AG04449 (cell line): ENCODE measurements at regions of chr10 and their contacts with region 1.

Region 1: GRCh38 chr10:132347211-132347930 is 15.4 kb downstream of the LRRC27 start:
- DNase-seq: no peak
- H3K4me3 ChIP-seq: no peak overlapping the region
- CTCF ChIP-seq: no peak

Region 2: DNA sequence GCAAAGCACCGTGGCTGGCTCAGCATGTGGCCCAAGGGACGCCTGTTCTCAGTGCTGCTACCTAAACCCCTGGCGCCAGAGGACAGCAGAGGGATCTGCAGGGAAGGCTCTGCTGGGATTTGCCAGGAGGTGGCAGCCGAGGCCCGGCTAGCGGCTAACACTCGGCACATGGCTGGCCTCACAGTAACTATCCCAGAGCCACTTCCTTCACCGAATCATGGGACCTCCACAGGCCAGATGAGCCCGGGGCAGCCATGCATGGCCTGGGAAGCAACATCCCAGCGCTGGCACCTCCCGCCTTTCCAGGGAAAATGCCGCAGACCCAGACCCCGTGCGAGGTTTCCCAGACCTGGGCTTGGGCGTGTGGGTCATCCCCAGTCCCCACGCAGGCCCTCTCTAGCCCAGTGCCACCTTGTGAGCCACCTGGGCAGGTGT is 124.2 kb before region 1 on chr10:
- CTCF ChIA-PET with region 1: interaction called, 49 read pairs
- POLR2A ChIA-PET with region 1: no interaction called
- DNase-seq: peak; percentile 7
- H3K4me3 ChIP-seq: no peak overlapping the region
- CTCF ChIP-seq: peak; percentile 99

Region 3: GRCh38 chr10:132335189-132336063 is 11.9 kb before region 1 on chr10:
- CTCF ChIA-PET with region 1: interaction called, 12 read pairs
- POLR2A ChIA-PET with region 1: no interaction called
- DNase-seq: no peak
- H3K4me3 ChIP-seq: no peak overlapping the region
- CTCF ChIP-seq: no peak

Region 4: DNA sequence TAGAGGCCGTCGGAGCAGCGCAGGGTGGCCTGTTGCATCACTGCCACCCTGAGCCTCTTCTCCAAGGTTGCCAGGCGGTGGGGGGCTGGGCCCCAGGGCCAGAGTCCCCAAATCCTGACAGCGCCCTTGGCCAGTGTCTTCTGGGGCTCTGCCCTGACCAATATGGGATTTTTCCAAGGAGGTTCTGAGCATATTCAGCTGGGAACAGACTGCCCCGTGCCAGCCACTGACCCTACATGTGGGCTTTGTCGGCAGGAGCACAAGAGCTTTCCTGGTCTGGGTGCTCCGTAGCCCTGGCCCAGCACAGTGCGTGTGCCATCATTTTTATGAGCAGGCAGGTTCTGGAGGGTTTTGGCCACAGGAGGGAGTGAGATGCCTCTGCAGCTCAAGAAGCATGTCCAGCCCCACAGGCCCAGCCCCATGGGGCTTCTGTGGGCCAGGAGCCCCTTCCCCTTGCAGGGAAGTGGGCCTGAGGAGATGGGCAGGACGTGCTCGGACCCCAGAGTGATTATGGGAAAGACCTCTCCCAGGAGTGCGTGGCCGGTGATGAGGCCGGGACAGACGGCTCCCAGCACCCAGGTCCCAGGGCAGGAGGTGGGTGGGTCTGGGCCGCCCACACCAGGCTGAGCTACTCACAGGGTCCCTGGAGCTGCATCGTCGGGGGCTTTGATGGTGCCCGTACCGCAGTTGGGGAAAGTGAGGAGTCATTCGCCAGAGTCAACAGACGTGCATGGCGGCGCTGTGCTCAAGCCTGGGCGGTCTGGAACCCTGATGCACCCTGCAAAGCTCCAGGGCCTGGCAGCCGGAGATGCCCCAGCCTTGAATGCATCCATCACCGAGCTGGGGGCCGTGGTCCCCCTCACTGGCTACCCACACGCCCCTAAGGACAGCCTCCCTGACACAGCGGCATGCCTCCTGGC is 116.2 kb after region 1 on chr10:
- CTCF ChIA-PET with region 1: no interaction called
- POLR2A ChIA-PET with region 1: no interaction called
- DNase-seq: no peak
- H3K4me3 ChIP-seq: no peak overlapping the region
- CTCF ChIP-seq: no peak